ENCODE measurements at regions of chr7 and their contacts with region 1.

Region 1: GRCh38 chr7:74569501-74570075 is 87.9 kb upstream of the GTF2I start:
- DNase-seq: peak; percentile 32
- H3K4me3 Mint-ChIP-seq: no peak overlapping the region
- H3K27ac Mint-ChIP-seq: peak overlapping the region; percentile 56
- H3K4me1 Mint-ChIP-seq: peaks cover 14% of the 10 kb centered on the region
- H3K27me3 Mint-ChIP-seq: peaks cover 28% of the 10 kb centered on the region

Region 2: DNA sequence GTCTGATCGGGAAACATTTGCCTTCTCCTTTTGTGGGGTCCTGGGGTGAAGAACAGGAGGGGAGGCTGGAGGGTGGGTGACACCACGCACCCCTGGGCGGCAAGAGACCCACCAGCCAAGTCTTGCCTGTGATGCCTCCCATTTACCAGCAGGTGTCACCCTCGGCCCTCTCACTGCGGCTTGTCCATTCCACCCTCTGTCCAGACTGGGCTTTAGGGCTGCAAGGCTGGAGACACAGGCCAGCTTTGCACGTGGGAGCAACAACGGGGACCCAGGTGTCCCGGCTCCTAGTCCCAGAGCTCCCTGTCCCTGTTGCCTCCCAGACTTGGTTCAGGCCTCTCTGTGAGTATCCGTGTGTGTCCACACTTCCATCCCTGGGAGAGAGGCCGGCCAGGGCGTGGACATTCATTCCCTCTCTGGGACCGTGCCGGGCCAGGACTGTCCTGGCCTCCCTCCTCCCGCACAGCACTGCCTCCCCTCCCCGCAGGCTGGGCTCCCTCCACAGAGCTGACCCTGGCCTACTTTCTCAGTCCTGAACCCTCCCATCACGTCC is 152.1 kb before region 1 on chr7:
- CTCF ChIA-PET with region 1: interaction called, 44 read pairs
- DNase-seq: peak; percentile 57
- H3K4me3 Mint-ChIP-seq: no peak overlapping the region
- H3K27ac Mint-ChIP-seq: no peak overlapping the region
- H3K4me1 Mint-ChIP-seq: no peaks in the 10 kb centered on the region
- H3K27me3 Mint-ChIP-seq: peaks cover 10% of the 10 kb centered on the region

Region 3: GRCh38 chr7:74449809-74450397 is 119.7 kb before region 1 on chr7:
- CTCF ChIA-PET with region 1: interaction called, 19 read pairs
- DNase-seq: peak; percentile 74
- H3K4me3 Mint-ChIP-seq: no peak overlapping the region
- H3K27ac Mint-ChIP-seq: no peak overlapping the region
- H3K4me1 Mint-ChIP-seq: peaks cover 21% of the 10 kb centered on the region
- H3K27me3 Mint-ChIP-seq: peaks cover 53% of the 10 kb centered on the region

Region 4: GRCh38 chr7:74587435-74588126 is 18.0 kb after region 1 on chr7:
- CTCF ChIA-PET with region 1: no interaction called
- DNase-seq: no peak
- H3K4me3 Mint-ChIP-seq: no peak overlapping the region
- H3K27ac Mint-ChIP-seq: no peak overlapping the region
- H3K4me1 Mint-ChIP-seq: no peaks in the 10 kb centered on the region
- H3K27me3 Mint-ChIP-seq: no peaks in the 10 kb centered on the region